ENCODE measurements at regions of chr15 and their contacts with region 1.

Region 1: DNA sequence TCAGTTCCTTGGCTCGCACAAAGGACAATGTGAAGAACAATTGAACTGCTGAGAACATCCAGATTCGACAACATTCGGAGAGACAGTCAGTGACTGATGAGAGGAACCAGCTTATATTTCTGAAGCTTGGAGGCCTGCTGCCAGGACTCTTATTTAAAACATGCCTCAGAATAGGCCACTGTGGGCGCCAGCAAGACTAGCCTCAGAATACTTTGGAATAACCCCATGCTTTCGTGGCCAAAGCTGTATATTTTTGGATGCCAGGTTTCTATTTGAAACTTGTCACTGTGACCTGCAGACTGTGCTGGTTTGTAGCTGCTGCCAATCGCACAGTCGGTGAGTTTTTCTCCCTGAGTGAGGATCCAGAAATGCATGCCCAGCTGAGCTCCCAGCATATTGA is 129.9 kb upstream of the UBE3A start:
- DNase-seq: peak in 4 of 5 donors; percentile 45 to 77 (median 48)
- ATAC-seq: peak; percentile 81 to 91 (median 89)
- H3K4me3 ChIP-seq: no peak overlapping the region
- H3K27ac ChIP-seq: peak overlapping the region in 8 of 12 donors; percentile 29 to 80 (median 54)
- H3K4me1 ChIP-seq: peaks cover 0 to 42% (median 7%) of the 10 kb centered on the region in 12 donors
- H3K27me3 ChIP-seq: no peaks in the 10 kb centered on the region
- CTCF ChIP-seq: no peak
- POLR2A ChIP-seq: no peak

Region 2: DNA sequence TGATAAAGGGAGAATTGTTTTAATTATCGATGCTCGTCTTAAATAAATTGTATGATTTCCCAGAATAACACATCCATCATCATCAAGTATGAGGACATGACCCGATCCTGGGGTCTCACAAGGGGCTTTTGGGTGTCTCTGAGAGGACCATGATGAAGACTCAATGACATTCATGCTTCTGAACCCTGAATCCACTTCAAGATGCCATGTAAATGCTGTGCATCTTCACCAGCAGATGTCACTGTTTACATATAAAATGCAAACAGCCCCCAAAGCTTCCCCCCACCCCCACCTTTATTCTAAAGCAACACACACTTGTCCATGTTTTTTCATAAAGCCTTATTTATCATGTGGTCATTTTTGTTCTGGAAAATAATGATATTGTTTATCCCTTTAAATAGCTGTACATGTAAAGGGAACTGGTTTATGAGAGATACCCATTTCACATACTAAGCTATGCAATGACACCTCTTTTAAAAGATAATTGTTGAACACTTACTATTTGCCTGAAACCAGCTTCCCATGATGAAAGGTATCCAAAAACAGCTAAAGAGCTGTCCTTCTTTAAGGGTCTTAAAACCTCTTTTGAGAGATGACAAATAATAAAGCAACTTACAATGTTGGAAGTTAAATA is 60.3 kb before region 1 on chr15:
- intact Hi-C with region 1: no loop called
- DNase-seq: no peak
- ATAC-seq: peak in 2 of 4 donors; percentile 39 to 52
- H3K4me3 ChIP-seq: no peak overlapping the region
- H3K27ac ChIP-seq: no peak overlapping the region
- H3K4me1 ChIP-seq: peaks cover 0 to 3% (median 0%) of the 10 kb centered on the region in 12 donors
- H3K27me3 ChIP-seq: no peaks in the 10 kb centered on the region
- CTCF ChIP-seq: peak; percentile 46 to 83 (median 72)
- POLR2A ChIP-seq: no peak

Region 3: DNA sequence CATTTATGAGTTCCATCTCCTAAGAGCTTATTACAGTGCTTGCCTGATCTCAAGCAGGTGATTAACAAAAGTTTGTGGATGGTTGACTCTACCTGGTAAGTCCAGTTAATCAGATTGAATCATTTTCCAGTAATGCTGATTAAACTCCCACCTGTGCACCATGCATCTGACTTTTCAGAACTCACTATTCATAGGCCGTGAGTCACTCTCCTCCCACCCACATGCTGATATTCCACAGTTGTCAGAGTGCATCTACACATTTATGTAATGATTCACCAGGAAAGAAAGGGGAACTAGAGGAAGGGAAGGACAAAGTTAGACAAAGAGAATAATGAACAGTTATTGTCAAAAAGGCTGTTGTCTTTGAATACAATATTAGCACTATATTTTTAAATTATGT is 23.7 kb before region 1 on chr15:
- intact Hi-C with region 1: loop called in 1 of 10 experiments (anchors 2 kb)
- DNase-seq: no peak
- ATAC-seq: peak in 3 of 4 donors; percentile 34 to 60 (median 47)
- H3K4me3 ChIP-seq: no peak overlapping the region
- H3K27ac ChIP-seq: no peak overlapping the region
- H3K4me1 ChIP-seq: peaks cover 0 to 24% (median 2%) of the 10 kb centered on the region in 12 donors
- H3K27me3 ChIP-seq: no peaks in the 10 kb centered on the region
- CTCF ChIP-seq: no peak
- POLR2A ChIP-seq: no peak

Region 4: GRCh38 chr15:25670025-25670554 is 101.3 kb after region 1 on chr15:
- intact Hi-C with region 1: loop called in 1 of 10 experiments (anchors 2 kb)
- DNase-seq: peak; percentile 77 to 85 (median 80)
- ATAC-seq: peak; percentile 87 to 96 (median 93)
- H3K4me3 ChIP-seq: peak overlapping the region in 8 of 12 donors; percentile 10 to 46 (median 28)
- H3K27ac ChIP-seq: peak overlapping the region in 11 of 12 donors; percentile 34 to 88 (median 77)
- H3K4me1 ChIP-seq: peaks cover 0 to 33% (median 15%) of the 10 kb centered on the region in 12 donors
- H3K27me3 ChIP-seq: peaks cover 0 to 5% (median 0%) of the 10 kb centered on the region in 9 donors
- CTCF ChIP-seq: peak in 2 of 12 donors; percentile 9 to 17
- POLR2A ChIP-seq: no peak

Region 5: DNA sequence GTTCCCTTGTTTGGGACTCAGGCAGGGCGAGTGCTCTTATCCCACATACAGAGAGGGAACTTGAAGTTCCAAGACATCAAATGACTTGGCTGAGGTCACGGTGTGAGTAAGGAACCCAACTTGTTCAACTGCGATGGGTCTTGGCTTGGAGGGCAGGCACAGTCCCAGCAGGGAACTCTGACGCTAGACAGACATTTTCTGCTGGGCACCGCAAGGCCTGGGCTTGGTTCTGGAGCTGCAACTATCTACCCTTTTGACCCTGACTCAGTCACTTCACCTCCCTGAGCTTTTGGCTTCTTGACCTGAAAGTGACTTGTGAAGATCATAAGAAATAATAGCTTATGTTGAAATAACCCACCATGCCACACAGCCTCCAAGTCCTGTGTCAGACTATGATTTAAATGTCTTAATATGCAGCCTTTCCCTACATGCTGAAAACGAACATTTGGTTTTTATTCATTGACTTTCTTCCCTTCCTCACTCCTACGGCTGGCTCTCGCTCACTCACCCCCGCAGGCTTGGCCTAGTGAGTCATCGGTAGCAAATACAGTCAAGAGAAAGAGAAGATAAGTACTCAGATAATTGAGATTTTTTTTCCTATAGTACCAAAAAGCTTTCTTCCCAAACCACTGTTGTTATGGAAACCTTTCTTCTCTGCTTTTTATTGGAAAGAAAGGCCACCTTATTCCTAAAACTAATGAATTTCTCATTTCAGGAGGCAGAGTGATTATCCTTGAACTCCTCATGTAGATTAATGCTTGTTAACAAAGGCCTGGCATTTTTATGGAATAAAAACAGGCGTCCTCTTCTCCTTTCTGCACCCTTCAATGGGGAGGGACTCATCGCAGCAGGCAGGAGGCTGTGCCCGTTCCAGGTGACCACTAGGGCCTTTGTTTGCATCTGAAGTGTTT is 116.0 kb after region 1 on chr15:
- intact Hi-C with region 1: loop called in 2 of 10 experiments (anchors 2 to 10 kb)
- DNase-seq: peak in 1 of 5 donors; percentile 58
- ATAC-seq: peak; percentile 16 to 77 (median 58)
- H3K4me3 ChIP-seq: no peak overlapping the region
- H3K27ac ChIP-seq: peak overlapping the region in 4 of 12 donors; percentile 26 to 55 (median 38)
- H3K4me1 ChIP-seq: peaks cover 0 to 35% (median 12%) of the 10 kb centered on the region in 12 donors
- H3K27me3 ChIP-seq: no peaks in the 10 kb centered on the region
- CTCF ChIP-seq: no peak
- POLR2A ChIP-seq: no peak